OCI-LY7 (cell line): ENCODE measurements at regions of chr1 and their contacts with region 1.

Region 1: GRCh38 chr1:197638316-197638715 is 137.0 kb downstream of the DENND1B start:
- DNase-seq: peak; percentile 88
- H3K4me3 ChIP-seq: peak overlapping the region; percentile 39
- H3K27ac ChIP-seq: peak overlapping the region; percentile 92
- H3K4me1 ChIP-seq: peaks cover 40% of the 10 kb centered on the region
- CTCF ChIP-seq: no peak

Region 2: DNA sequence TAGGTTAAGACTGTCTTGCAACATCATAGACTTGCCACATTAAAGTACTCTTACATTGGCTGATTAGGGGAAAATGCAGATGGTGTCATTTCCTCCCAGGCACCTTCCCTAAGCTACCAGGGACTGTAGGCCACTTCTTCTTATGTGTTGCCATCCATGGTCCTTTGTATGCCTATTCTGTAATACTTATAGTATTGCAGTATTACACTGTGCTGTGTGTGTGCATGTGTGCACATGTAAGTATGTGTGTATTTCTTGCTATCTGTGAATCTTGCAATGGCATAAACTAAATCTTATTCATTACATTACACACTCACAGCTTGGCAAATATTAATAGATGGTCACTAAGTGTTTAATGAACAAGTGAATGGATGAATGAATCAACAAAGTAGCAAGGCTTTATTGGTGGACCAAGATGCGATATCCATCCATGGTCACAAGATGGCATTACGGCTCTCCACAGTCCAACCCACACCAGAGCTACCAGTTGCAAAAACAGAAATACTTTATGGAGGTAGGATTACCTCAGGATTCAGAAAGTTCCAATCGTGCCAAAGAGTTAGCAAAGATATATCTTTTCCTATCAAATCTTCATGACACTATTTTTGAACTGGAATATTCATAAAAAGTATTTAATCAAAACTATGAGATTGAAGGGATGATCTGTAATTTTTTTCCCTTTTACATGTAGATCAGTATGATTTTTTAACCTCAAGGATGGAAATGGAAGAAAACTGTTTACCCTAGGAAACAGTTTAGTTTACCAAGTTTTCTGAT is 23.2 kb before region 1 on chr1:
- CTCF ChIA-PET with region 1: no interaction called
- POLR2A ChIA-PET with region 1: interaction called, 11 read pairs
- intact Hi-C with region 1: no loop called
- DNase-seq: peak; percentile 53
- H3K4me3 ChIP-seq: no peak overlapping the region
- H3K27ac ChIP-seq: no peak overlapping the region
- H3K4me1 ChIP-seq: peaks cover 10% of the 10 kb centered on the region
- CTCF ChIP-seq: peak; percentile 92

Region 3: DNA sequence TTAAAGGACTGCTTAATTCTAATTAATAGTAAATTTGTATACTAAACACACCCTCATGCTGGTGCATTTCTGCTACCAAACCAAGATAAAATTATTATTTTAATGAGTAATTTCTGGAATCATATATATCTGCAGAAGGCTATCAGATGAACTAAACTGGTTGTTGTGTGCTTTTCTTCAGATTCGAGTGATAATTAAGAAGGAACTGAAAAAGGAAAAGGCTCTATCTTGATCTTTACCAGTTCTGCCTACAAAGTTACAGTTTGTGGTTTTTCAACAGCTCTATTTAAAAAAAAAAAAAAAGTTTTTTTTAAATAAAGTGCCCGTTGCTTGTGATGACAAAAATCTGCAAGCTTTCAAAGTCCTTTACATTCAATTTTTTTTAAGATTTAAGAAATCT is 123.3 kb after region 1 on chr1:
- CTCF ChIA-PET with region 1: no interaction called
- POLR2A ChIA-PET with region 1: interaction called, 7 read pairs
- intact Hi-C with region 1: loop called (anchors 1 kb)
- DNase-seq: peak; percentile 63
- H3K4me3 ChIP-seq: peak overlapping the region; percentile 46
- H3K27ac ChIP-seq: peak overlapping the region; percentile 87
- H3K4me1 ChIP-seq: peaks cover 27% of the 10 kb centered on the region
- CTCF ChIP-seq: no peak

Region 4: GRCh38 chr1:197838836-197839235 is 200.5 kb after region 1 on chr1:
- CTCF ChIA-PET with region 1: no interaction called
- POLR2A ChIA-PET with region 1: no interaction called
- intact Hi-C with region 1: no loop called
- DNase-seq: no peak
- H3K4me3 ChIP-seq: no peak overlapping the region
- H3K27ac ChIP-seq: no peak overlapping the region
- H3K4me1 ChIP-seq: no peaks in the 10 kb centered on the region
- CTCF ChIP-seq: no peak

Region 5: GRCh38 chr1:198167436-198167934 is 529.2 kb after region 1 on chr1:
- CTCF ChIA-PET with region 1: no interaction called
- POLR2A ChIA-PET with region 1: no interaction called
- intact Hi-C with region 1: loop called (anchors 10 kb)
- DNase-seq: peak; percentile 33
- H3K4me3 ChIP-seq: peak overlapping the region; percentile 11
- H3K27ac ChIP-seq: peak overlapping the region; percentile 27
- H3K4me1 ChIP-seq: peaks cover 38% of the 10 kb centered on the region
- CTCF ChIP-seq: no peak